Left cardiac atrium (tissue), 4 donors: ENCODE measurements at regions of chr2 and their contacts with region 1.

Region 1: GRCh38 chr2:200483729-200484198 is 26.1 kb downstream of the KCTD18 start:
- DNase-seq: peak; percentile 24
- ATAC-seq: peak in 1 of 2 donors; percentile 50

Region 2: DNA sequence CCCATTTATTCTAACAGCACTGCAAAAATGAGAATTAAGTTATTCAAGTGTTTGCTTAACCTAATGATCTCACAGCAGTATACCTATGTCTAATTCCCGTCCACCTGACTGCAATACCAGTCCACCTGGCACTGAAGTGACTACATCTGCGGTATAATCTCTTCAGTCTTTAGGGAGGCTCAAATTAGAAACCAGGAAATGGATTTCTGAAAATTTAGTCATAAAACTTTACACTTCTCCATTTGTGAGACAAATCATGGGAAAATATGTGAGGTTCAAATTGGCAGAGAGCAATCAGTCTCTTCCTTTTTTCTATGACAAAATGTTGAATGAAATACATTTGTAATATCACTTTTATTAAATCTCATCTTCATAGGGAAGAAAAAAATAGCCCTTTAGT is 665.7 kb before region 1 on chr2:
- intact Hi-C with region 1: no loop called
- DNase-seq: no peak
- ATAC-seq: no peak

Region 3: DNA sequence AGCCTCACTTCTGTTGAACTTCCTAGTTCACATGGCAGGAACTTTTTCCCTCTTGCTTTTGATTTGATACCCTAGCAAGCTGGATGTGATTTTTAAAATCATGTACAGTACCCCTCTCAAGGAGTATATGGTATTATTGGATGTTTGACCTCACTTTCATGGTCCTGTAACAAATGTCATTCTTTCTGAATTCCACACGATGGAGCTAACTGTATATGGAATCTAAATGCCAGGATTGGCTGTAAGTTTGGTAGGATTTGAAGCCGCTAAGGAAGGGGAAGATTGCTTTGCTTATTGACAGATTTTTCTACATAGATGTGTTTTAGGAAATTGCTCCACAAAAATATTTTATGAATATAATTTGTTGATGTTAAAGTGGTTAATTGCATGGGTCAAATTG is 510.1 kb before region 1 on chr2:
- intact Hi-C with region 1: loop called in 1 of 2 experiments (anchors 5 kb)
- DNase-seq: no peak
- ATAC-seq: peak in 1 of 2 donors; percentile 52

Region 4: GRCh38 chr2:199979832-199980628 is 503.7 kb before region 1 on chr2:
- intact Hi-C with region 1: loop called in 1 of 2 experiments (anchors 2 kb)
- DNase-seq: peak; percentile 88
- ATAC-seq: peak; percentile 81 to 83

Region 5: DNA sequence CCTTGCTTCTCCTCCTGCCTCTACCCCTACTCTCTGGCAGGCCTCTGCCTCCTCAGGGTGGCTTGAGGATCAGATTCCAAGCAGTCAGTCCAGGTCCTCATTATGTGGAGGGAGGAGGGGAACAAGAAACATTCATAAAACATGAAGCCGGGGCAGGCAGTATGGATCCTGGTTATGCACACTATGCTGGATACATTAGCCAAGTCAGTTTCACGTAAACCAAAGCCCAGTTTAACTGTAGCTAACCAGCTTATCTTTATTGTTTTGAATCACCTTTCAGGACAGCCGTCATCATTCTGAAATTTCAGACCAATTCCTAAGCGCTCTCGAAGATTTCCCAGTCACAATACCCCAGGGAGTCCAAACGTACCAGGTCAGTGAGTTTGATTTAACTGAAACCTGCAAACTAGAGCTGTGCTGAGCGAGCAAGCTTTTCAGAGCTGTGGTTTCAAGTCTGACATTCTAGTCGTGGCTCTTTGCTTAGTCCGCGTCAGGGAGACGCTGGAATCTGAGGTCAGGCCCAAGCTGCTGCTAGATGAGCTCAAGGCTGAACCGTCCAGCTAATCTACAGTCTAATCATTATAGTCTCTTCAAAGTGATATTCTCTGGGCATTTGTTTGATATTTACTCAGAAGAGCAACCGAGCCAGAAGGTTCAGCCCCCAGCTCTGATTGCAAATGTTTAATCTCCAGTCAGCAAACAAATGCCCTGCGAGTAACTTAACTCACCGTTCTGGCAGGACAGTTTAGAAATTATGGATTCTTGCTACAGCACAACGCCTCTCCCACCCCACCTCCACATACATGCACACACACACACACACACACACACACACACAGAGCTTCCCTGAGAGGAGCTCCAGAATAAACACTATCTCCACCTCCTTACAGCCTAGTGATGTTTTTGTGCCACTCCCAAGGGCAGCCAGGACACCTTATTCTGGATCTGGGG is 264.2 kb after region 1 on chr2:
- intact Hi-C with region 1: no loop called
- DNase-seq: no peak
- ATAC-seq: peak in 1 of 2 donors; percentile 53